Activated T-helper 1 cell treated with anti-CD3 and anti-CD28 coated beads, Interleukin-12 subunit alpha, Interleukin-12 subunit beta, Interleukin-2, Interleukin-4 antibody, amounts not matched to agents 30 ng/mL and 10 ng/mL and 1 ng/mL, durations not matched to agents 14 hours and 24 hours and 36 hours (primary cell): ENCODE measurements at regions of chr1 and their contacts with region 1.

Region 1: DNA sequence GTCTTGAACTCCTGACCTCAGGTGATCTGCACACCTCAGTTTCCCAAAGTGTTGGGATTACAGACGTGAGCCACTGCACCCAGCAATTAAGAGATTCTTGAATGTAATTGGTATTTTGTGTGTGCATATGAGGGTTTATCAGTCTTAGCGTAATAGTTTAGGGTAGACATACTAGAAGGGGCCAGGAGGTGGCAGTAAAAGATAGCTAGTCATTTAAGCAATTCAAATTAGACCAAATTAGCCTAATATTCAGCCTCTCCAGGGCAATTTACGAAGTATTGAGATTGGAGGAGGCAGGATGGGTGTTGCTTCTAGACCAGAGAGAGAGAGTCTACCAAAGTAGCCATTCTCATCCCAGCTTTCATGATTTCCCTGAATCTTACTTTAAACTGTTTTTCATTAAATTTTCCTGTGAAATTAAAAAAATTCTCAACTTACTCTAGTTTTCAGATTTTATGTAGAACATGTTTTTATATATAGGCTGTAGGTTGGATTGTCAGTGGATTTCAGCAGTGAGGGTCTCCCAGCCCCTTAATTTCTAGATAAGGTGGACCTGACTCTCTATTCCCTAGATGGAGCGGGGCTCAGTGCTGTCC is 119.7 kb downstream of the HHAT start:
- DNase-seq: no peak
- H3K4me3 Mint-ChIP-seq: no peak overlapping the region
- H3K27ac Mint-ChIP-seq: no peak overlapping the region
- H3K4me1 Mint-ChIP-seq: peaks cover 21% of the 10 kb centered on the region
- H3K27me3 Mint-ChIP-seq: peaks cover 3% of the 10 kb centered on the region

Region 2: DNA sequence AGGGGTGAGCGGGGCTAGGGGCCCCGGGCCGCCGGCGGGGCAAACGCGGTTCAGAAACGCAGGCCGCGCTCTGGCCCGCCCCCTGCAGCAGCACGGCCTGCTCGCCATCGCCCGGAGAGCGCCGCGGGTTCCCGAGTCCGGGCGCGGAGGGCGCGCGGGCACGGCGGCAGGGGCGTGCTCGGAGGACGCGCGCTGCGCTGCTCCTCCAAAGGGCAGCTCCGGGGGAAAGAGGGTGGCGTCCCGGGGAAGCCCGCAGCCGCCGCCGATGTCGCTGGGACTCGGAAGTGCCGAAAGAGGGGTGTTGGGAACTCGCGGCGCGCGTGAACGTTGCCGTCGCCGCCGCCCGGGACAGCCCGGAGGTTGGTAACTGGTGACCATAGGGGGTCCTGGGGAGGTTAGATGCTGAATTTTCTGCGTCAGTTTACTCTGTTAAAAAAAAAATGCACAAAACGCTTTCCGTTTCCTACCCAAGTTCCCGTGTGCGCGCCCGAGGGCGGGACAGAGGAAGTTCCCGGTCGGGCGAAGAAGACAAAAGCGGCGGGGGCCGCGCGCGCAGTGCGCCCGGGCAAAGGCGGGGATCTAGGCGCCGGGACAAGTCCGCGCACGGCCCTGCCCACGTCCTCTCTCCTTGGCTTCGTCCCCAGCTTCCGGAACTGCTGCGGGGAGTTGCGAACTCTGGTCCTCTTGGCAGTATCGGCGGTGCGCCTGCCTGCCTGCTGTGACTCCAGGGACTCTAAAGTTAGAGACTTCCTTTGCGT is 119.5 kb before region 1 on chr1 and contains the start of gene HHAT:
- intact Hi-C with region 1: loop called (anchors 2 kb)
- DNase-seq: peak; percentile 52
- H3K4me3 Mint-ChIP-seq: peak within 1 kb of the TSS; percentile 90
- H3K27ac Mint-ChIP-seq: peak within 1 kb of the TSS; percentile 95
- H3K4me1 Mint-ChIP-seq: peaks cover 42% of the 10 kb centered on the region
- H3K27me3 Mint-ChIP-seq: peaks cover 12% of the 10 kb centered on the region
- total RNA-seq, gene HHAT: 0.67 and 0.73 TPM in 2 replicates

Region 3: GRCh38 chr1:210407207-210407886 is 41.0 kb before region 1 on chr1:
- intact Hi-C with region 1: loop called (anchors 2 kb)
- DNase-seq: peak; percentile 49
- H3K4me3 Mint-ChIP-seq: no peak overlapping the region
- H3K27ac Mint-ChIP-seq: no peak overlapping the region
- H3K4me1 Mint-ChIP-seq: no peaks in the 10 kb centered on the region
- H3K27me3 Mint-ChIP-seq: peaks cover 6% of the 10 kb centered on the region

Region 4: GRCh38 chr1:210418863-210419650 is 29.3 kb before region 1 on chr1:
- intact Hi-C with region 1: no loop called
- DNase-seq: no peak
- H3K4me3 Mint-ChIP-seq: no peak overlapping the region
- H3K27ac Mint-ChIP-seq: no peak overlapping the region
- H3K4me1 Mint-ChIP-seq: no peaks in the 10 kb centered on the region
- H3K27me3 Mint-ChIP-seq: peaks cover 11% of the 10 kb centered on the region

Region 5: DNA sequence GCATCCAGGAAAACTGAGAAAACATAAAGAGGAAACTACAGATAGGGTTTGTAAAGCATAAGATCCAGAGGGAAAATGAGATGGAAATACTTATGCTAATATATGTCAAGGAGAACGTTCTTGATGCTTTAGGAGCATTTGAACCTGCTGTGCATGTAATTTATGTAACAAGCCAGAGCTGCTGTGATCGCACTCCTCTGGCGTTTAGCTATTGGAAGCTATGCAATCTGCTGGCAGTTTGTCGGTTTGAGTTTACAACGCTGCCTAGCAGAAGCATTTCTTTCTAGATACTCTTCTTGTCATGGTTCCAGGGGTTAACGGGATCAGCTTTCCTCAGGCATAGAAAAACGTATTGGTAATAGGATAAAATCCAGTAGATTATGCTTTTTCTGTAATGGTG is 502.9 kb after region 1 on chr1:
- intact Hi-C with region 1: loop called (anchors 1 kb)
- DNase-seq: no peak
- H3K4me3 Mint-ChIP-seq: no peak overlapping the region
- H3K27ac Mint-ChIP-seq: no peak overlapping the region
- H3K4me1 Mint-ChIP-seq: no peaks in the 10 kb centered on the region
- H3K27me3 Mint-ChIP-seq: peaks cover 3% of the 10 kb centered on the region

Region 6: GRCh38 chr1:211476200-211476849 is 1027.9 kb after region 1 on chr1:
- intact Hi-C with region 1: loop called (anchors 1 kb)
- DNase-seq: peak; percentile 64
- H3K4me3 Mint-ChIP-seq: no peak overlapping the region
- H3K27ac Mint-ChIP-seq: no peak overlapping the region
- H3K4me1 Mint-ChIP-seq: no peaks in the 10 kb centered on the region
- H3K27me3 Mint-ChIP-seq: peaks cover 27% of the 10 kb centered on the region

Region 7: DNA sequence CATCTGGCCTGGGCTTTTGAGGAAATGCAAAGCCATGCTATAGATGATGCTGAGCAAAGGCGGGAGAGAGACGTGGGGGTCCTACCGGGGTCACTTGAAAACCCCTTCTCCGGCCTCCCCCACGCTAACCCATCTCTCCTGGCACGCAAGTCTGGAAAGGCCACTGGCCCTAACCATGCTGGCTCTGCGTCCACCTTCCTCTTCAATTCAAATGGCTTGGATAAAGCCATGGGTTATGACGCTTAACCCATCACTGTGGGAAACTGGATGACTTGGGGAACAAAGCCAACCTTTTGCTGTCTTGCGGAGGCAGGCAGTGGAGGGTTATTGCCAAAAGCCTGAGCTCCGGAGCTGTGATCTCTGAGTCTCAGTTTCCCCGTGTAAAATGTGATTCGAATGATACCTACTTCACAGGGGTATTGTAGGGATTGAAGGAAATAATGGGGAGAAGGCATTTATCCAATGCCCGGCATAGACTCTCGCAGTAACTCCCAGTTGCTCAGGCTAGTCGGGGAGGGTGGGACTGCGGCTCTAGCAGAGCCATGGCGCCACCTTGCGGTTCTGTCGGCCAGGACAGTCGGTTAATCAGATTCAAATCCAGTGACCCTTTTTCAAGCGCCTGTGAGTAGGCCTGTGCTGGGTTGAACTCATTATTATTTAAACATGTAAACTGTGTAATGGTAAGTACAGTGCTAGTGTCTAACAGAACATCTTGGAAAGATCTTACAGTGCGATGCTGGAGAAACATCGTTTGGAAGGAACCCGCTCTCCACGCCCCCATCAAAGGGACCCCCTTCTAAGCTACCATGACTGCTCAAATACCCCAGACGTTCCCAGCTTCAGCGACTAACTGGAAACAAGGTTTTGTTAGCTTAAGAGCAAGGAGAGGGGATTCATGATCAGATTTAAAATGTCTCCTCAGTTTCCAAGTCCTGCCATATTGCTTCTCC is 1206.7 kb after region 1 on chr1:
- intact Hi-C with region 1: loop called (anchors 1 kb)
- DNase-seq: peak; percentile 63
- H3K4me3 Mint-ChIP-seq: no peak overlapping the region
- H3K27ac Mint-ChIP-seq: no peak overlapping the region
- H3K4me1 Mint-ChIP-seq: peaks cover 6% of the 10 kb centered on the region
- H3K27me3 Mint-ChIP-seq: peaks cover 3% of the 10 kb centered on the region